ENCODE measurements at regions of chr6 and their contacts with region 1.

Region 1: GRCh38 chr6:17803409-17803808 is 96.7 kb upstream of the NUP153 start:
- DNase-seq: no peak
- H3K4me3 ChIP-seq: no peak overlapping the region
- H3K27ac ChIP-seq: no peak overlapping the region
- H3K4me1 ChIP-seq: no peaks in the 10 kb centered on the region
- H3K27me3 ChIP-seq: no peaks in the 10 kb centered on the region
- CTCF ChIP-seq: no peak
- EP300 ChIP-seq: no peak
- POLR2A ChIP-seq: no peak
- RAD21 ChIP-seq: no peak

Region 2: DNA sequence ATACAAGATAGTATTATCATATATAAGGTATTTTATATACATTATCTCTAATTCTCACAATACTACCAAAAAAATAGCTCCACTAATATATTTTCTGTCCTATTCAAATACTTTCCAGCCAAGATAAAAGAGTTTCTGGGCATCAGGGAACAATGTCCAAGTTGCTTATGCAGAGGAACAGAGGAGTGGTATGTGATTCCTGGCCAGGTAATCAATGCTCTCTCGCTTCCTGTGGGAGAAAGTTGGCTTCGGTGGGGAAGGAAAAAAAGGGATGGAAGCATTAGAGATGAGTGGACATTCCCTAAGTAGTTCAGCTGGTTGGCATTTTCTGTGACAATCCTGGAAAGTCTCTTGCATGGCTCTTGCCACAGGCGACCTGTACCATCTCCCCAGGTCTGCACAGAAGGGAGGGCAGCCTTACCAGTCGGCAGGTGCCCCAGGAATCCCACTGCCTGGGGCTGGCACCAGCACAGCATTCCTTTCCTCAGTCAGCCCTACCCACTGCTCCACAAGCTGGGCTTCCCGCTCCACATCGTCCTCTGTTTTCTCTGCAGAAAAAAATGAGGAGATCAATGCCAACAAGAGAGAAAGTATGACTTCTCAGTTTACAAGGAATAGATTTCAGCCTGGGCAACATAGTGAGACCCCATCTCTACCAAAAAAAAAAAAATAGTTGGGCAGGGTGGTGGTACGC is 18.2 kb before region 1 on chr6:
- CTCF ChIA-PET with region 1: interaction called, 20 read pairs
- POLR2A ChIA-PET with region 1: interaction called, 3 read pairs
- DNase-seq: no peak
- H3K4me3 ChIP-seq: no peak overlapping the region
- H3K27ac ChIP-seq: no peak overlapping the region
- H3K4me1 ChIP-seq: peaks cover 0 to 6% (median 1%) of the 10 kb centered on the region in 4 experiments; a peak in 2 of 7 replicates
- H3K27me3 ChIP-seq: no peaks in the 10 kb centered on the region
- CTCF ChIP-seq: no peak
- EP300 ChIP-seq: no peak
- POLR2A ChIP-seq: no peak
- RAD21 ChIP-seq: no peak

Region 3: DNA sequence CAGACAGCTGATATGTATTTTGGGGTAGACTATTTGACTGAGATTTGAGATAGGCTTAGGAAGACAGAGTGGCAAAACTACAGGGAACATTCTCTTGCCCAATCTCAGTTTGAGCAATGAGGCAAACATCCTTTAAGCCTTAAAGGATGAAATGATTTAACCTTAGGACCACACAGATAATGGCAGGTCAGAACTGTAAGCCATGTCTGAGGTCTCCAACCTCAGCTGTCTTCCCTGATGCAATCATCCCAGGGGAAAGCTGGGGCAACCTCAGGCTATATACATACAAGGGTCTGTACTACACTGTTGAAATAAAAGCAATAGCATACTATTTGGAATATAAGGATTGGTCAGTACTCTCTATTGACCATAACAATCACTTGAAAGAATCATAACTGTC is 12.9 kb before region 1 on chr6:
- CTCF ChIA-PET with region 1: interaction called, 26 read pairs
- POLR2A ChIA-PET with region 1: interaction called, 3 read pairs
- DNase-seq: no peak
- H3K4me3 ChIP-seq: no peak overlapping the region
- H3K27ac ChIP-seq: no peak overlapping the region
- H3K4me1 ChIP-seq: no peaks in the 10 kb centered on the region
- H3K27me3 ChIP-seq: no peaks in the 10 kb centered on the region
- CTCF ChIP-seq: no peak
- EP300 ChIP-seq: no peak
- POLR2A ChIP-seq: no peak
- RAD21 ChIP-seq: no peak

Region 4: DNA sequence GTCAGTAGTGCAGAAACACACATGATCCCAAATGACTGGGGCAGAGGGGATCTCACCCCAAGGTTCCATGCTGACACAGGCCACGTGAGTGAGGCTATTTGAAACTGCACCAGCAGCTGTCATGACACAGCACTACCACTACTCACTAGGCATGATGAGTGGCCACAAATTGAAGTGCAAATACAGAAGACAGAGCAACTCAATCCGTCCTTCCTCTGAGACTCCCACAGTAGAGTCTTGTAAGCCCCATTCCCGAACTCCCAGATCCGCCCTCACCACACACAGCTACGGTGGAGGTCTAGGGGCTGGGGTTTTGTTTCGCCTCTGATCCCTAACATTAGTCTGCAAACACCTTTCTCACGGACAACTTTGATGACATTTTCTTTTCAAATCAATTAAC is 16.6 kb after region 1 on chr6:
- CTCF ChIA-PET with region 1: interaction called, 55 read pairs
- POLR2A ChIA-PET with region 1: no interaction called
- DNase-seq: no peak
- H3K4me3 ChIP-seq: no peak overlapping the region
- H3K27ac ChIP-seq: no peak overlapping the region
- H3K4me1 ChIP-seq: peaks cover 0 to 2% (median 0%) of the 10 kb centered on the region in 4 experiments; a peak in 1 of 7 replicates
- H3K27me3 ChIP-seq: no peaks in the 10 kb centered on the region
- CTCF ChIP-seq: peak in 1 of 3 experiments; percentile 25; a peak in 1 of 4 replicates
- EP300 ChIP-seq: no peak
- POLR2A ChIP-seq: no peak
- RAD21 ChIP-seq: no peak; a peak in 1 of 4 replicates

Measured in H1 (cell line).